CD8-positive, alpha-beta T cell (primary cell): ENCODE measurements at regions of chr12 and their contacts with region 1.

Region 1: DNA sequence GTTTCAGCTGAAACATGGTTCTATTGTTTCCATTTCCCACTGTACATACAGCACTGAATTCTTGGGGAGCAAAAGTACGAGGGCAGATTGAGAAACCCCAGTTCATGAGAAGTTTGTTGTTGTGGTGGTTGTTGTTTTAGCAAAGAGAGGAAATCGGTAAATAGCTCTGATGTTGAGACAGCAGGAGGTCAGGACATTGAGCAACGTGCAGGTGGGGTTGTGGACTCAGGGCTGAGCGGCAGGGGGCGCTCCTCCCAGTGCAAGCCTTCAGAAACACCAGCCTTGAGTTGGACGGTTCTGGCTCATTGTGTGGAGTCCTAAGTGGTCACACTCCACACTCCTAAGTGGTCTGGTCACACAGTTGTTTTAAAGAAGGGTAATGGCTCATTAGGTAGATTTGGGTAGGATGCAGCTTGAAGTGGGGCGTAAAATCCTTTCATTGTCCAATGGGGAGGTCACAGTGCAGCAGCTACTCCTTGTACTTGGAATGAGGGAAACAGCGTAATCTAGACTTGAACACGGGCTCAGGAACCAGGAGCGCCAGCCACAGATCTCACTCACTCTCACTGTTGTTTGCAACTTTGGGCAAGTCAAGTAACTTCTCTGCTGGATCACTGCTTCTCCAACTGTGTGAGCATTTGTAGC is 14.5 kb upstream of the PWP1 start:
- DNase-seq: peak in 5 of 9 experiments; percentile 9 to 49 (median 28)
- ATAC-seq: peak; percentile 48
- H3K4me3 ChIP-seq: no peak overlapping the region
- H3K4me3 Mint-ChIP-seq: no peak overlapping the region
- H3K27ac ChIP-seq: no peak overlapping the region
- H3K27ac Mint-ChIP-seq: no peak overlapping the region
- H3K4me1 ChIP-seq: no peaks in the 10 kb centered on the region
- H3K4me1 Mint-ChIP-seq: peaks cover 2% of the 10 kb centered on the region
- H3K27me3 ChIP-seq: no peaks in the 10 kb centered on the region
- H3K27me3 Mint-ChIP-seq: peaks cover 20% of the 10 kb centered on the region
- CTCF ChIP-seq: peak; percentile 51

Region 2: GRCh38 chr12:106108185-106108835 is 1562.8 kb before region 1 on chr12:
- CTCF ChIA-PET with region 1: no interaction called
- POLR2A ChIA-PET with region 1: no interaction called
- intact Hi-C with region 1: no loop called
- DNase-seq: no peak
- ATAC-seq: no peak
- H3K4me3 ChIP-seq: no peak overlapping the region
- H3K4me3 Mint-ChIP-seq: no peak overlapping the region
- H3K27ac ChIP-seq: no peak overlapping the region
- H3K27ac Mint-ChIP-seq: no peak overlapping the region
- H3K4me1 ChIP-seq: no peaks in the 10 kb centered on the region
- H3K4me1 Mint-ChIP-seq: no peaks in the 10 kb centered on the region
- H3K27me3 ChIP-seq: no peaks in the 10 kb centered on the region
- H3K27me3 Mint-ChIP-seq: peaks cover 26% of the 10 kb centered on the region
- CTCF ChIP-seq: no peak

Region 3: DNA sequence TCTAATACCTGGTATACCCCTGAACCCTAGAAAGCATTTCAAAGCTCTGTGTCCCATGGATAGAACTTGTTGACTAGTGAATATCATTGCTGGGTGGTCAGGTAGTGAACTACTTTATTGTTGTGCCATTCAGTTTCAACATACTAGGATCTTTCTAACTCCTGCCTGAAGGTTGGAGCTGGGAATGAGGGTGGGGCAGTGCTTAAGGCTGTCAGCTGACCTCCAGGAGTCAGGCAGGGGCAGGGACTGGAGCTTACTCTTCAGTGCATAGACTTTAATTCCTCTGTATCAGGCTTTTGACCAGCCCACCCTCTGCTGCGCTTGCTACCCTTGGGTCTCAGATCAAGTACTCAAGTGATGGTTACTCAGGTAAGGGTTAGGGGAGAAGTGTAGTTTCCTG is 1190.9 kb before region 1 on chr12:
- CTCF ChIA-PET with region 1: no interaction called
- POLR2A ChIA-PET with region 1: no interaction called
- intact Hi-C with region 1: no loop called
- DNase-seq: no peak
- ATAC-seq: no peak
- H3K4me3 ChIP-seq: no peak overlapping the region
- H3K4me3 Mint-ChIP-seq: no peak overlapping the region
- H3K27ac ChIP-seq: no peak overlapping the region
- H3K27ac Mint-ChIP-seq: no peak overlapping the region
- H3K4me1 ChIP-seq: no peaks in the 10 kb centered on the region
- H3K4me1 Mint-ChIP-seq: no peaks in the 10 kb centered on the region
- H3K27me3 ChIP-seq: no peaks in the 10 kb centered on the region
- H3K27me3 Mint-ChIP-seq: no peaks in the 10 kb centered on the region
- CTCF ChIP-seq: no peak

Region 4: GRCh38 chr12:107884769-107885694 is 213.9 kb after region 1 on chr12:
- CTCF ChIA-PET with region 1: interaction called, 12 read pairs
- POLR2A ChIA-PET with region 1: no interaction called
- intact Hi-C with region 1: loop called in 1 of 2 experiments (anchors 1 kb)
- DNase-seq: peak in 6 of 9 experiments; percentile 13 to 61 (median 27)
- ATAC-seq: peak; percentile 49
- H3K4me3 ChIP-seq: no peak overlapping the region
- H3K4me3 Mint-ChIP-seq: no peak overlapping the region
- H3K27ac ChIP-seq: no peak overlapping the region
- H3K27ac Mint-ChIP-seq: no peak overlapping the region
- H3K4me1 ChIP-seq: no peaks in the 10 kb centered on the region
- H3K4me1 Mint-ChIP-seq: no peaks in the 10 kb centered on the region
- H3K27me3 ChIP-seq: peaks cover 0 to 3% of the 10 kb centered on the region in 2 experiments
- H3K27me3 Mint-ChIP-seq: peaks cover 22% of the 10 kb centered on the region
- CTCF ChIP-seq: peak; percentile 52